ENCODE measurements at regions of chr4 and their contacts with region 1.

Region 1: DNA sequence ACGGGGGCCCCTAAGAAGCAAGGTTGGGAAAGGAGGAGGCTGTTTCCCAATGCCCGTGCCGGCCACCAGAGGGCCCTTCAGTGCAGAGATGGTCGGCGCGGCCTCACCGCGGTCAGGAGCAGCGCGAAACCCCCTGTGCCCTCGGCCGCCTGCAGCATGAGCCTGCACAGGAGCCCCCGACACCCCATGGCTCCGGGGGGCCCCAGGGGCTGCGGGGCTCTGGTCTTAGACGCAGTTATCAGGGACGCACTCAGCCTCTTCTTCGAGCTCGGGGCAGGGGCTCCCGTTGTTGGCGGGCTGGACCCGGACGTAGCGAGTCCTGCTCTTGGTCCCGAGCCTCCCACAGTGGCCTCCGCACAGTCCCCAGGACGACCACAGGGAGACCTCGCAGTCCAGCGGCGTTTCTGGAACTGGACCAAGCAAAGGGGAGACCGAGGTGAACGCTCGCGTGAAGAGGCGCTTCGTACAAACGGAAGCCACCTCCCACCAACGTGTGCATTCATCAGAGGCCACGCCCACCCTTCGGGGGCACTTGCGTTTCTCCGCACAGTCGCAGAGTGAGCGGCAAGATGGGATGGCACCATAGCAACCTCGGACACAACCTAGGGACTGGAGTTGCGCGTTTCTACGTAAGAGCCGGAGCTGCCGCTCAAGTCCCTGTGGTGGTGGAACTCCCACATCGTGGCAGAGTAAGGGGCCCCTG is 5.0 kb downstream of the SPON2 start:
- DNase-seq: peak; percentile 95
- ATAC-seq: peak; percentile 92
- H3K4me3 Mint-ChIP-seq: peak overlapping the region; percentile 73
- H3K27ac Mint-ChIP-seq: peak overlapping the region; percentile 76
- H3K4me1 Mint-ChIP-seq: peaks cover 22% of the 10 kb centered on the region
- H3K27me3 Mint-ChIP-seq: peaks cover 15% of the 10 kb centered on the region

Region 2: GRCh38 chr4:1200425-1201035 is 33.1 kb after region 1 on chr4:
- CTCF ChIA-PET with region 1: interaction called, 23 read pairs
- POLR2A ChIA-PET with region 1: interaction called, 3 read pairs
- intact Hi-C with region 1: loop called (anchors 1 to 5 kb)
- DNase-seq: peak; percentile 51
- ATAC-seq: no peak
- H3K4me3 Mint-ChIP-seq: peak overlapping the region; percentile 74
- H3K27ac Mint-ChIP-seq: peak overlapping the region; percentile 73
- H3K4me1 Mint-ChIP-seq: peaks cover 40% of the 10 kb centered on the region
- H3K27me3 Mint-ChIP-seq: no peaks in the 10 kb centered on the region

Region 3: DNA sequence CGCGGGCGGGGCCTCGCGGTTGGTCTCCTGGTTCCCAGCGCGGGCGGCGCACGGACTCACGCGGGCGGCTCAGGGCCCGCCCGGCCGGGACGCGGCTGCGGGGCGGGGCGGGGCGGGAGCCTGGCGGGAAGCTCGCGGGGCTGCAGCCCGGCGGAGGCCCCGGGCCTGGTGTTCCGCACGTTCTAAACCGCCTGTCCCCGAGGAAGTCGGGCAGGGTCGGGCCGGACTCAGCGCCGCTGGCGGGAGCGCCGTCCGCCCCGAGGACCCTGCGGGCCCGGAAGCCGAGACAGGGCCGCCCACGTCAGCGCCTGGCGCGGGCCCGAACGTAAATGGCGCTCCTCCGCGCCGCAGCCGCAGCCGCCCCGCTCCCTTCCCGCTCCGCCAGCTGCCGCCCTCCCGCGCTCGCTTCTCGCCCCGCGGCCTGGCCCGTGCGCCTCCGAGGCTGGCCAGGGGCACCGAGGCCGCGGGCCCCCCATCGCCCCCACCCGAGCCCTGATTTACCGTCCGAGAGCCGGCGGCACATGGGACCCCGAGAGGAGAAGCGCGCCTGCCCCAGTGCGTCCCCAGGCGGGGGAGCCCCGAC is 81.8 kb after region 1 on chr4:
- CTCF ChIA-PET with region 1: no interaction called
- POLR2A ChIA-PET with region 1: no interaction called
- intact Hi-C with region 1: loop called (anchors 1 to 5 kb)
- DNase-seq: peak; percentile 90
- ATAC-seq: peak; percentile 63
- H3K4me3 Mint-ChIP-seq: peak overlapping the region; percentile 80
- H3K27ac Mint-ChIP-seq: peak overlapping the region; percentile 94
- H3K4me1 Mint-ChIP-seq: peaks cover 74% of the 10 kb centered on the region
- H3K27me3 Mint-ChIP-seq: no peaks in the 10 kb centered on the region

Region 4: GRCh38 chr4:1346781-1347409 is 179.5 kb after region 1 on chr4 and contains the start of gene UVSSA:
- CTCF ChIA-PET with region 1: interaction called, 4 read pairs
- POLR2A ChIA-PET with region 1: no interaction called
- intact Hi-C with region 1: loop called (anchors 1 to 2 kb)
- DNase-seq: peak; percentile 100
- ATAC-seq: peak; percentile 95
- H3K4me3 Mint-ChIP-seq: peak within 1 kb of the TSS; percentile 86
- H3K27ac Mint-ChIP-seq: peak within 1 kb of the TSS; percentile 87
- H3K4me1 Mint-ChIP-seq: peaks cover 47% of the 10 kb centered on the region
- H3K27me3 Mint-ChIP-seq: no peaks in the 10 kb centered on the region
- total RNA-seq, gene UVSSA: 14.8 to 18.1 TPM

Measured in activated CD4-positive, alpha-beta T cell treated with anti-CD3 and anti-CD28 coated beads for 36 hours (primary cell).